PC-3 (cell line): ENCODE measurements at regions of chr14 and their contacts with region 1.

Region 1: DNA sequence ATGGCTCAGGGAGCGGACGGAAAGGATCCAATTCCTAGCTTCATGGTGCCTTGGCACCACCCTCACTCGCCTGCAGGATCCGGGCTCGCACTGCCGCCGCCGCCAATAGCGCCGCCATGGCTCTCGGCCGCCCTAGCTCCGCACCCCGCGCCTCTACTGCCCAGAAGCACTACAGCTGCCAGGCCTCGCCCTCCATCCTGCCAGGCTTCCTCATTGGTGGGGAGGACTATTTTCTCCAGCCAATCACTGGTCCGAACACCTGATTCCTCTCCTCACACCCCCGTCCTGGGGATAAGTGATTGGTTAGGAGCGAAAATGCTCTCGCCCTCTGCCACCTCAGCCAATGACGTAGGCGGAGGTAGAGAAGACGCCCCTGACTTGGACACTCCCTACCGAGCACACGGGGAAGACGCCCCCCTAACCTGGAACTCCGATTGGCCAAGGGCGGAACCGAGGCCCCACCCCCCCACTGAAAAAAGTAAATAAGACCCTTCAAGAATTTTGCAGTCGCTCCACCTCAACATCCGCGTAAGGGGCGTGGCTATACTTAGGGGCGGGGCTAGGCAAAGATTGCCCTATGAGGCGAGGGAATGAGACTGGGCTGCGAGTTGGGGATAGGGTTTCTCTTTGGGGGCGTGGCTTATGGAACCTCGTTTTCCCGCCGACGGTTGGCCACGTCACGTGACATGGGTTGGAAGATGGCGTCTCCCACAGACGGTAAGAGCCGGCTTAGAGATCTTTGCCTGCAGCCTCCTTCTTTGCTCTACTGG is at the starts of genes ALDH6A1 and LIN52:
- DNase-seq: peak; percentile 100
- ATAC-seq: peak; percentile 92
- H3K4me3 ChIP-seq: peak within 1 kb of the TSS; percentile 88
- H3K27ac ChIP-seq: peak within 1 kb of the TSS; percentile 21; the same call in 1 of the 2 replicates
- H3K4me1 ChIP-seq: peaks cover 20% of the 10 kb centered on the region
- H3K27me3 ChIP-seq: no peaks in the 10 kb centered on the region
- CTCF ChIP-seq: no peak; the same call in 1 of the 2 replicates
- total RNA-seq, gene ALDH6A1: 5.0 and 5.4 TPM in 2 replicates
- total RNA-seq, gene LIN52: 8.4 and 9.3 TPM in 2 replicates

Region 2: DNA sequence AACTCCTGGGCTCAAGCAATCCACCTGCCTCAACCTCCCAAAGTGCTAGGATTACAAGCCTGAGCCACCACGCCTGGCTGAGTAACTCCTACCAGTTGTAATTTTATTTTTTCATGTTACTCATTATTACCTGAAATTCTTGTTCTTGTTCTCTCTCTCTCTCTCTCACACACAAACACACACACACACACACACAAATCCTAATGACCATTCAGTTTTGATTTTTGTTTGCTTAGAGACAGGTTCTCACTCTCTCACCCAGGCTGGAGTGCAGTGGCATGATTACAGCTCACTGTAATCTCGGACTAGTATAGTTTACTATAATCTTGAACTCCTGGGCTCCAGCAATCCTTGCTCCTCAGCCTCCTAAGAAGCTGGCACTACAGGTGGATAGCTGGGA is 409.4 kb before region 1 on chr14:
- CTCF ChIA-PET with region 1: no interaction called
- POLR2A ChIA-PET with region 1: no interaction called
- intact Hi-C with region 1: no loop called
- DNase-seq: peak; percentile 57
- ATAC-seq: peak; percentile 52
- H3K4me3 ChIP-seq: no peak overlapping the region
- H3K27ac ChIP-seq: peak overlapping the region; percentile 81
- H3K4me1 ChIP-seq: peaks cover 10% of the 10 kb centered on the region
- H3K27me3 ChIP-seq: no peaks in the 10 kb centered on the region
- CTCF ChIP-seq: no peak

Region 3: DNA sequence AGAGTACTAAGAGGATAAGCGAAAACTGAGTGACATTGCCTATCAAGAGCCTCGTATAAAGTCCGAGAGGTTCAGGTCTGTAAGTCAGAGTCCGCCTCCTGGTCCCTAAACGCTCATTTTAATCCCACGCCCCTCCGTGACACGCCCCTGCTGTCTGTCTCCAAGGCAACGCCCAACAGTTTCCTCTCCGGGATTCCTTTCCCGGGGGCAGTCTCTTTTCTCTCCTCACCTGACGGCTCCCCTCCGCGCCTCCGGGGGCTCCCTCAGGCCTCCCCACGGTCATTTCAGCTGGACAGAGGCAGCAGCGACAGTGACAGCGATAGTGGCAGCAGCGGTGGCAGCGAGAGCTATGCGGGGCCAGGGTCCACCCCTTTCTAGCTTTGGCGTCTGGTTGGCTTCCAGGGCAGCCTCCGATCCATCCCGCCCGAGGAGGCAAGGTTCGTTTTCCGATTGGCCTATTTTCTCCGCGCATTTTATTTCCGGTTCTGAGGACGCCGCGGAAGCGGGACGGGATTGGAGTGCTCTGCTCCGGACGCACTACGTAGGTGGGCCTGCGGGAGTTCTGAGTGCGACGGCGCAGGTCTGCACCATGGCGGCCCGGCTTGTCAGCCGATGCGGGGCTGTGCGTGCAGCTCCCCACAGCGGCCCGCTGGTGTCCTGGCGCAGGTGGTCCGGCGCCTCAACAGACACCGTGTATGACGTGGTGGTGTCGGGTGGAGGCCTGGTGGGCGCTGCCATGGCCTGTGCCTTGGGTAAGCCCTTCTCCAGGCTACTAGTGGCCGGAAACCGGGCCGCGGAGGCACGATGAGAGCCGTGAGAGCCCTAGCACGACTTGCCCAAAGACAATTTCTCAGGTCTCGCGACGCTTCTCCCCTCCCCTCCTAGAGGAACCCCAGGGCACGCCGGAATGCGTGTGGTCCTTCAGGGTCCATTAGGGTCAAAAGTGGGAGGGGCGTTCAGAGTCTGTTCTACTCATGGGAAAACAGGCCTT is 134.4 kb before region 1 on chr14 and contains the starts of genes COQ6 and FAM161B:
- CTCF ChIA-PET with region 1: no interaction called
- POLR2A ChIA-PET with region 1: no interaction called
- intact Hi-C with region 1: loop called (anchors 5 kb)
- DNase-seq: peak; percentile 99
- ATAC-seq: peak; percentile 97
- H3K4me3 ChIP-seq: peak within 1 kb of the TSS; percentile 91
- H3K27ac ChIP-seq: peak within 1 kb of the TSS; percentile 70
- H3K4me1 ChIP-seq: no peaks in the 10 kb centered on the region
- H3K27me3 ChIP-seq: no peaks in the 10 kb centered on the region
- CTCF ChIP-seq: no peak
- total RNA-seq, gene COQ6: 33.2 and 40.3 TPM in 2 replicates
- total RNA-seq, gene FAM161B: 2.8 and 3.5 TPM in 2 replicates

Region 4: DNA sequence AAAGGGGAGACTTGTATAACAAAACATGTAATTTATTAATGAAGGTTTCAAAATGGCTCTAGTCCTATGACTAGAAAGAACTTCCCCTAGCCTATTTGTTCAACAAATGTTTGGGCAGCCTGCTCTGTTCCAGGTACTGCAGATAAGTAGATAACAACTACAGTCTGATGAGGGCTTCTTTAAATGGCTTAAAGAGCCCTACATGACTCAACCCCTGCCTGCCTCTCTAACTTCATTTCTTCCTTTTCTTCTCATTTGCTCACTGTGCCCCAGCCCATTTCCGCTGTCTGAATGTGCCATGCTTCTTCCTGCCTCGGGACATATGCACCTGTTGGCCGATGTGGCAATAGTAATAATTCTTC is 21.7 kb before region 1 on chr14:
- CTCF ChIA-PET with region 1: no interaction called
- POLR2A ChIA-PET with region 1: no interaction called
- intact Hi-C with region 1: no loop called
- DNase-seq: peak; percentile 68
- ATAC-seq: peak; percentile 70
- H3K4me3 ChIP-seq: no peak overlapping the region
- H3K27ac ChIP-seq: peak overlapping the region; percentile 58
- H3K4me1 ChIP-seq: peaks cover 27% of the 10 kb centered on the region
- H3K27me3 ChIP-seq: no peaks in the 10 kb centered on the region
- CTCF ChIP-seq: no peak

Region 5: DNA sequence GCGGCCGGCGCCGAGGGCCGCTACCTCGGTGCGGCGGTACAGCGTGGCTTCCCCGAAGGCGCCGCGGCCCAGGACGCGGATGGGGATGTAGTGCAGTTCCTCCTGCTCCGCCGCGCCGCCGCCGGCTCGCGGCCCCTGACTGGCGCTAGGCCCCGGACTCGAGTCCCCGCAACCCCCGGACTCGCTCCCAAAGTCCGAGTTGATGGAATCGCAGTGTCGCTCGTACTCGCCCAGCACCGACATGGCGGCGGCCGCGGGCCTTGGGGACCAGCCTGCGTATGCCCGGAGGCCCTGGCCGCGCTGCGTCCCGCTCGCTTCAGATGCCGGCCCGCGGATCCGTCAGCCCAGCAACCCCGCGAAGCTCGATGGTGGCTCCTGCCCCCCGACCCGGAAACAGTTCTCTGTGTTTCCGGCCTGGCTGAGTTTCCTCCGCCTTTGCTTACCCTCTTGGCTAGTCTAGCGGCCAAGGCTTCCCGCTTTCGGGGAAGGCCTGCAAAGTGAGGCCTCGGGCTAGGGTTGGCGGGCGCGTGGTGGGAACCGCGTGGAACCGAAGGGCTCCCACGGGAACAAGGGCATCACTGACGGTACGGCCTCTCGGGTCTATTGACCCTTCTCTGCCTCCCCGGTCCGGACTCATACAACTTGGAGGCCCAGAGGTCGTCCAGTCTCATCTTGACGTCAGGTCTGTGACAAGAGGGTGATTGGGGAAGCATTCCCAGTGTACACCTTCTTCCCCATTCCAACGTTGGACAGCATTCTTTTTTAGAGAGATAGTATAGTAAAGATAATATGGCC is 1042.4 kb after region 1 on chr14 and contains the start of gene NEK9:
- CTCF ChIA-PET with region 1: no interaction called
- POLR2A ChIA-PET with region 1: interaction called, 13 read pairs
- intact Hi-C with region 1: no loop called
- DNase-seq: peak; percentile 80
- ATAC-seq: peak; percentile 79
- H3K4me3 ChIP-seq: peak within 1 kb of the TSS; percentile 82
- H3K27ac ChIP-seq: peak within 1 kb of the TSS; percentile 51
- H3K4me1 ChIP-seq: peaks cover 33% of the 10 kb centered on the region
- H3K27me3 ChIP-seq: no peaks in the 10 kb centered on the region
- CTCF ChIP-seq: no peak
- total RNA-seq, gene NEK9: 29.6 and 44.5 TPM in 2 replicates